Activated CD4-positive, alpha-beta T cell treated with anti-CD3 and anti-CD28 coated beads for 36 hours (primary cell): ENCODE measurements at regions of chr2 and their contacts with region 1.

Region 1: GRCh38 chr2:54704688-54705605 is 18.5 kb upstream of the EML6 start:
- DNase-seq: no peak
- ATAC-seq: peak; percentile 69
- H3K4me3 Mint-ChIP-seq: no peak overlapping the region
- H3K27ac Mint-ChIP-seq: no peak overlapping the region
- H3K4me1 Mint-ChIP-seq: peaks cover 9% of the 10 kb centered on the region
- H3K27me3 Mint-ChIP-seq: peaks cover 25% of the 10 kb centered on the region

Region 2: DNA sequence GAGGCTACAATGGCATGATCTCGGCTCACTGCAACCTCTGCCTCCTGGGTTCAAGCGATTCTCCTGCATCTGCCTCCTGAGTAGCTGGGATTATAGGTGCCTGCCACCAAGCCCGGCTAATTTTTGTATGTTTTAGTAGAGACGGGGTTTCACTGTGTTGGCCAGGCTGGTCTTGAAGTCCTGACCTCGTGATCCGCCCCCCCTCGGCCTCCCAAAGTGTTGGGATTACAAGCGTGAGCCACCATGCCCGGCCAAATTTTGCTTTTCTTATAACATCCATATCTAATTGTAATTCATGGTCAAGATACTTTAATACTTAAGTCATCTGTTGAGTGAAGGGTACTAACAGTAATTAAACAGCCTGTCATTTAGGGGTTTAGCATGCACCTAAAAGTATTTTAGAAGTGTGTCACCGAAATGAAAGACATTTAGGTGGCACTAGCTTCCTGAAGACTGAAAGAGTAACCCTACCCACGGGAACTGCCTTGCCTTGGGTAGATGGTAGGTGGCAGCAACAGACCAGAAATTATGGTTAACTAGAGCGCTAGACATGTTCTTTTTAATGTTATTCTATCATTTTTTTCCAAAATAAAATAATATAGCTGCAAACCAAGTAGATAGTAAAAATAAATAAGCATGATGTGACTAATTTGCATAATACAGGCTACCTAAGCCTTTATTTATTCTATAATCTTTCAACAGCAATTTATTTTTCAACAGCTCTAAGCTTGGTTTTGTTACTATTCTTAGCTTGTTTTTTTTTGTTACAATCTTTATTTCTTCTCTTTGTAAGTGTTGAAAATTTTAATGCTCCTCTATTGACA is 598.1 kb before region 1 on chr2:
- CTCF ChIA-PET with region 1: interaction called, 19 read pairs
- POLR2A ChIA-PET with region 1: no interaction called
- intact Hi-C with region 1: loop called (anchors 1 to 10 kb)
- DNase-seq: peak; percentile 61
- ATAC-seq: peak; percentile 82
- H3K4me3 Mint-ChIP-seq: no peak overlapping the region
- H3K27ac Mint-ChIP-seq: no peak overlapping the region
- H3K4me1 Mint-ChIP-seq: peaks cover 9% of the 10 kb centered on the region
- H3K27me3 Mint-ChIP-seq: peaks cover 2% of the 10 kb centered on the region

Region 3: DNA sequence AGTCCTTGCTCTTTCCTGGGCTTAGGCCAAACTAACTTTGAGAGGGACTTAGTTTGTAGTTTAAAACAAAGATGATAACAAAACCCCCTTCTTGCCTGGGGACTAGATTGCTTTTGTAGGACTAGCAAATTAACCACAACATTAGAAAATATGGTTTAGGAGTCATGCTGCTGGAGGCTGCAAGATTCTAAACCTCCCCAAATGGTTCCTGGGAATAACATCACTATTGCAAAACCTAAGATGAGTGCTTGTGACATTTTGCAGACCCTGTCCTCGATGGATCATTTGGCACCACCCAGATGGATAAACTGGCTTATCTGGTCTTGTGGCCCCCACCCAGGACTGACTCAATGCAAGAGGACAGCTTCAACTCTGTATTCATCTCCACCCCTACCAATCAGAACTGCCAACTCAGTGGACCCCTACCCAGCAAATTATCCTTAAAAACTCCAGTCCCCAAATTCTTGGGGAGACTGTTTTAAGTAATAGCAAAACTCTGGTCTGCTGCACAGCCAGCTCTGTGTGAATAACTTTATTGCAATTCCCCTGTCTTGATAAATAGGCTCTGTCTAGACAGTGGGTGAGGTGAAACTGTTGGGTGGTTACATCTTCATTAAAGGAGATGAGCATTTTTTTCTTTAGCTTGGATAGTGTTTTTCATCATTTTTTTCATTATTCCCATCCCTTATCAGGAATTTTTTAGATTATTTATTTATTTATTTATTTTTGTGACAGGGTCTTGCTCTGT is 190.0 kb before region 1 on chr2:
- CTCF ChIA-PET with region 1: interaction called, 74 read pairs
- POLR2A ChIA-PET with region 1: no interaction called
- intact Hi-C with region 1: no loop called
- DNase-seq: no peak
- ATAC-seq: no peak
- H3K4me3 Mint-ChIP-seq: no peak overlapping the region
- H3K27ac Mint-ChIP-seq: no peak overlapping the region
- H3K4me1 Mint-ChIP-seq: no peaks in the 10 kb centered on the region
- H3K27me3 Mint-ChIP-seq: peaks cover 2% of the 10 kb centered on the region

Region 4: GRCh38 chr2:54657664-54658083 is 47.3 kb before region 1 on chr2:
- CTCF ChIA-PET with region 1: interaction called, 222 read pairs
- POLR2A ChIA-PET with region 1: no interaction called
- intact Hi-C with region 1: loop called in 1 of 2 experiments (anchors 1 kb)
- DNase-seq: peak; percentile 64
- ATAC-seq: no peak
- H3K4me3 Mint-ChIP-seq: no peak overlapping the region
- H3K27ac Mint-ChIP-seq: peak overlapping the region; percentile 72
- H3K4me1 Mint-ChIP-seq: peaks cover 15% of the 10 kb centered on the region
- H3K27me3 Mint-ChIP-seq: no peaks in the 10 kb centered on the region

Region 5: DNA sequence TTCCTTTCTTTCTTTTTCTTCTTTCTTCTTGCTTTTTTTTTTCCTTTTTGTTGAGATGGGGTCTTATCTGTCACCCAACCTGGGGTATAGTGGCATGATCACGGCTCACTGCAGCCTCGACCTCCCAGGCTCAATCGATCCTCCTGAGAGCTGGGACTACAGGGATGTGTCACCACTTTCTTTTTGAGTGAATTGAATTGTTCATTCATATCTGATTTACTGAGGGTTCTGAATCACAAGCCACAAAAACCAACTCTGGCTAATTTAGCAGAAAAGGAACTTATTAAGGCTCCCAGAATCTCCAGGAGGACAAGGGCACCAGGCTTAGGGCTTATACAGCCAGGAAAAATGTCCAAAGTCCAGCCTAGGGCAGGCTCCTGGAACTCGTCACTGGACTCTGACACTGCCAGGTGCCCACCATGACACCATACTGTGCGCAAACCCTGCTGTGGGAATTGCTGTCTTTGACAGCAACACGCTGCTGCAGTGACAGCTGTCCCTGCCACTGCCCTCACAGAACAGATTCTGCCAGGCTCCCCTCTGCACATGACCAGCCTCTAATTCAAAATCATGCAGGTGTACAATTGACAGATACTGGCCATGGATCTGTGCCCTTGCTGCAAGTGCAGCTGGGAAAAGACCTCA is 24.4 kb before region 1 on chr2:
- CTCF ChIA-PET with region 1: interaction called, 12 read pairs
- POLR2A ChIA-PET with region 1: no interaction called
- intact Hi-C with region 1: loop called in 1 of 2 experiments (anchors 2 kb)
- DNase-seq: peak; percentile 69
- ATAC-seq: peak; percentile 95
- H3K4me3 Mint-ChIP-seq: no peak overlapping the region
- H3K27ac Mint-ChIP-seq: peak overlapping the region; percentile 72
- H3K4me1 Mint-ChIP-seq: peaks cover 22% of the 10 kb centered on the region
- H3K27me3 Mint-ChIP-seq: peaks cover 61% of the 10 kb centered on the region

Region 6: GRCh38 chr2:54741250-54741649 is 36.3 kb after region 1 on chr2:
- CTCF ChIA-PET with region 1: no interaction called
- POLR2A ChIA-PET with region 1: no interaction called
- intact Hi-C with region 1: no loop called
- DNase-seq: no peak
- ATAC-seq: no peak
- H3K4me3 Mint-ChIP-seq: no peak overlapping the region
- H3K27ac Mint-ChIP-seq: no peak overlapping the region
- H3K4me1 Mint-ChIP-seq: no peaks in the 10 kb centered on the region
- H3K27me3 Mint-ChIP-seq: peaks cover 5% of the 10 kb centered on the region

Region 7: DNA sequence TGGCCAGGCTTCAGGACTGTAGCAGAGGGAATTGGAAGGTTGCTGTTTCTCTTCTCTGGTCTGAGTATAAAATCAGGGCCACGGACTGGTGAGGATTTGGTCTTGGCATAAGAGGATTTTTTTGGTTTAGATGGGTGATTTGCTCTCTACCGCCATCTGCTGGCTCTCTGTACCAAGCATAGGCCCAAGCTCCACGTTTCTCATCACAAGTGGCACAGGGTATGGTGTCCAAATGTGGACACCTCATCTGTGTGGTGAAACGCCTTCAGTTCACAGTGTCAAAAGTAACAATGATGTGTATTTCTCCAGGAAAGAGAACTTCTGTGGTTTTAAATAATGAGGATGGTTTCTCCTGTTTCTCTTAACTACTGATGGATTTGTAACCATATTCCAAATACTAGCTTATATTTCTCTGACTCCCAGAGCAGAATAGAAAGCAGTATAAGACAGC is 133.7 kb after region 1 on chr2:
- CTCF ChIA-PET with region 1: interaction called, 10 read pairs
- POLR2A ChIA-PET with region 1: no interaction called
- intact Hi-C with region 1: loop called in 1 of 2 experiments (anchors 5 kb)
- DNase-seq: peak; percentile 79
- ATAC-seq: peak; percentile 97
- H3K4me3 Mint-ChIP-seq: no peak overlapping the region
- H3K27ac Mint-ChIP-seq: no peak overlapping the region
- H3K4me1 Mint-ChIP-seq: no peaks in the 10 kb centered on the region
- H3K27me3 Mint-ChIP-seq: no peaks in the 10 kb centered on the region